Right lobe of liver (tissue), 6 donors: ENCODE measurements at regions of chr5 and their contacts with region 1.

Region 1: GRCh38 chr5:1182633-1183423 is 18.6 kb upstream of the SLC6A19 start:
- DNase-seq: peak; percentile 77 to 91 (median 90)
- ATAC-seq: peak; percentile 43 to 65 (median 62)
- H3K4me3 ChIP-seq: peak overlapping the region; percentile 30 to 57 (median 49)
- H3K27ac ChIP-seq: peak overlapping the region; percentile 56 to 95 (median 82)
- H3K4me1 ChIP-seq: peaks cover 0 to 58% (median 27%) of the 10 kb centered on the region in 4 donors
- H3K27me3 ChIP-seq: no peaks in the 10 kb centered on the region
- CTCF ChIP-seq: no peak
- POLR2A ChIP-seq: peak; percentile 82

Region 2: DNA sequence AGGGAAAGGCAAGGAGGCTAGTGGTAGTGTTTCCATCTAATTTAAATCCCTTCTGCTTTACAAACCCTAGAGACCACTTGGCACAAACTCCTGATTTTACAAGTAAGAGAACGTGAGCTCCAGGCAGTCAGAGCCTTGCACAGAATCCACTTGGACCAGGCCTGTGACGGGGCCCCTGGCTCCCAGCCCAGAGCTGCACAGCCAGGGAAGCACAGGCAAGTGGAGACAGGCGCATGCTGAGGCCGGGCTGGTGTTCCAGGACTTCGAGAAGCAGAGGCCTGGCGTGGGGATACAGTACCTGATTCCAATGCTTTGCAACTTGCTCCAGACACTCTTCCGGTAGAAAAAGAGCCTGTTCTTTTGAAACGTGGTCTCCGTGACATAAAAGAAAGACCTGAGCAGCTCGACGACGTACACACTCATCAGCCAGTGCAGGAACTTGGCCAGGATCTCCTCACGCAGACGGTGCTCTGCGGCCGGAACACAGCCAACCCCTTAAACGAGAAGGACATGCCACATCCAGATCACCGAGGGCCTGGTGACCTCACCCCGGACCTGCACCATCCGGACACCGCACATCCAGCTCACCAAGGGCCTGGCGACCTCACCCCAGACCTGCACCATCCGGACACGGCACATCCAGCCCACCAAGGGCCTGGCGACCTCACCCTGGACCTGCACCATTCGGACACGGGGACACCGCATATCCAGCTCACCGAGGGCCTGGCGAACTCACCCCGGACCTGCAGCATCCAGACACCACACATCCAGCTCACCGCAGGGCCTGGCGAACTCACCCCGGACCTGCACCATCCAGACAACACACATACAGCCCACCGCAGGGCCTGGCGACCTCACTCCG is 99.5 kb after region 1 on chr5:
- intact Hi-C with region 1: no loop called
- DNase-seq: peak in 1 of 3 donors; percentile 35
- ATAC-seq: no peak
- H3K4me3 ChIP-seq: no peak overlapping the region
- H3K27ac ChIP-seq: no peak overlapping the region
- H3K4me1 ChIP-seq: no peaks in the 10 kb centered on the region
- H3K27me3 ChIP-seq: no peaks in the 10 kb centered on the region
- CTCF ChIP-seq: no peak
- POLR2A ChIP-seq: no peak

Region 3: DNA sequence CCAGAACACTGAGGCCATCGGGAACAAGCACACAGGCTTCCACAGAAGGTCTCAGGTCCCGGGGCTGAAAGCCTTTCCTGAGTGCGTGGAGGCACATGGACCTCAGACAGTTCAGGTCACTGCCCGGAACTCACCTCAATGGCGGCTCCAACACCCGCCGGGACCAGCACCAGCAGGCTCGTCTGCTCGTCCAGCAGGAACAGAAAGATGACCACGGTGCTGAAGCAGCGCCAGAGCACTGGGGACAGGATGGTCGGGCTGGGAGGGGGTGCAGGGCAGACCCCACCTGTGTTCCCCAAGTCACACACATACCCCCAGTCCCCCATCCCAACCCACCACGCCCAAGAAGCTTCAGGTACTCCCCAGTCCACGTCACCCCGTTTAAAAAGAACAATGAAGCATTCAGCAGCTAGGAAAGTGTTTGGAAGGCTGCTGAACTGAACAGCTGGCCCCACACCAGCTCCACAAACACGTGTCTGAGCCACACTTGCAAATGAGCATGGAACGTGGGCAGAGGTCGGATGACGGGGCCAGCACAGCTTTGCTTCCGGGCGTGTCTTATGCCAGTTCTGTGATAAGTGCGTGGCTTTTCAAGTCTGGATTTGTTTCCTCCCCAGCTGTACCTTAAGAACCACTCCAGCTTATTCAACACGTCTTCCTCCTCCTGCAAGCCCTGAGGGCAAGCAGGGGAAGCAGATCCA is 147.5 kb after region 1 on chr5:
- intact Hi-C with region 1: loop called (anchors 5 to 10 kb)
- DNase-seq: peak in 2 of 3 donors; percentile 77 to 84
- ATAC-seq: peak; percentile 73 to 91 (median 82)
- H3K4me3 ChIP-seq: no peak overlapping the region
- H3K27ac ChIP-seq: peak overlapping the region in 1 of 3 donors; percentile 16
- H3K4me1 ChIP-seq: peaks cover 0 to 7% (median 0%) of the 10 kb centered on the region in 4 donors
- H3K27me3 ChIP-seq: no peaks in the 10 kb centered on the region
- CTCF ChIP-seq: no peak
- POLR2A ChIP-seq: peak; percentile 21

Region 4: DNA sequence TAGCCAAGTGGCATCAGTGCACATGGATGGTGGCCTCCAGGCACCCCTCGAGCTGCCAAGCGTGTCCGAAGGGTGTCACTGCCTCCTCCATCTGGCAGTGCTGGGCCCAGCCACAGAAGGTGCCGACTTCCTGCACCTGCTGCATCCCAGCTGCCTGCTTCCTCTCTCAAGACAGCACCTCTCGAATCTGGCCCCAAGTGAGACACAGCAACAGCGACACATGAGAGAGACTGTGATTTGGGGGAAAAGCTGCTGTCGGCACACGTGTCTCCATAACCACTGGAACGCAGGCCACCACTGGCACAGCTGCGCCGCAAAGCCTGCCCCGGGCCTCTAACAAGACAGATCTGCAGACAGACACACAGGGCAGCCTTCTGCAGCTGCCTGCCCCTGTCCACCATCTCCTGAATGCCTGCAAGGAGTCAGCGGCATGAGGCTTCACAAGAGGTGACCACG is 153.3 kb after region 1 on chr5:
- intact Hi-C with region 1: loop called (anchors 5 to 10 kb)
- DNase-seq: no peak
- ATAC-seq: no peak
- H3K4me3 ChIP-seq: no peak overlapping the region
- H3K27ac ChIP-seq: peak overlapping the region in 1 of 3 donors; percentile 80
- H3K4me1 ChIP-seq: peaks cover 0 to 40% (median 20%) of the 10 kb centered on the region in 4 donors
- H3K27me3 ChIP-seq: no peaks in the 10 kb centered on the region
- CTCF ChIP-seq: no peak
- POLR2A ChIP-seq: no peak